ENCODE measurements at regions of chr4 and their contacts with region 1.

Region 1: GRCh38 chr4:15457406-15458201 is 12.1 kb upstream of the CC2D2A start:
- DNase-seq: no peak

Region 2: DNA sequence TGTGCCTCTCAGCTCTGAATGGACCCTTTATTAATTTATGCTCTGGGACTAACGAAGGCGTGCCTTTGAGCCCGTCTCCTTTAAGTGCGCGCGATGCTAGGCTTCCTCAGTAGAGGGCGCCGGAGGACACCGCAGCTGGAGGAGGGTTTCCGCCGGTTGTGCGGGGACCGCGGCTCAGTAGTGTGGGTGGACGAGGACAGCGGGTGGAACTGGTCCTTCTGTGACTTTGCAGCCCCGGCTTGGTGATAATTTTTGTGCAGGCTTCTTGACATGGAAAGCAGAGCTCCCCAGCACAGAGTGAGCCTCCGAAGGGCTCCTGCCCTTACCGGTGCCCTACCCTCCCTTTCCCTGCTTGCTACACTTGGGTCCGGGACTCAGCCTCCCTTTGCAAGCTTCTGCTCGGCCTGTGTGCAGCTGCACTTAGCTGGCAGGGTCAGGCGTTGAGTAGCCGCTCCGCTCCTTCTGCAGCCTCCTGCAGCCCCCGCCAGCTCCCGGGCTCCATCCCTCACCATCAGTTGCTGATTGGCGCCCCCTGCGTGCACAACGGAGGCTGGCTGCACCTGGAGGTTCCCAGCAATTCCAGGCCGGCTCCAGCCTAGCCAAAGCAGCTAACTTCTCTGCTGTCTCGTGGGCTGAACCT is 1803.3 kb before region 1 on chr4:
- intact Hi-C with region 1: loop called (anchors 10 kb)
- DNase-seq: peak; percentile 80 to 97 (median 90)

Region 3: GRCh38 chr4:15231265-15232091 is 226.1 kb before region 1 on chr4:
- intact Hi-C with region 1: loop called (anchors 1 kb)
- DNase-seq: peak in 9 of 10 donors; percentile 14 to 93 (median 71)

Region 4: GRCh38 chr4:15238720-15239119 is 218.9 kb before region 1 on chr4:
- intact Hi-C with region 1: loop called (anchors 1 kb)
- DNase-seq: peak in 4 of 10 donors; percentile 4 to 83 (median 26)

Measured in posterior cingulate gyrus (tissue), 11 donors.